ENCODE measurements at regions of chr17 and their contacts with region 1.

Region 1: GRCh38 chr17:3647769-3648555 is 11.4 kb downstream of the CTNS start:
- DNase-seq: peak; percentile 51
- H3K4me3 ChIP-seq: no peak overlapping the region
- H3K27ac ChIP-seq: no peak overlapping the region
- H3K4me1 ChIP-seq: no peaks in the 10 kb centered on the region
- H3K27me3 ChIP-seq: no peaks in the 10 kb centered on the region
- CTCF ChIP-seq: peak; percentile 41

Region 2: DNA sequence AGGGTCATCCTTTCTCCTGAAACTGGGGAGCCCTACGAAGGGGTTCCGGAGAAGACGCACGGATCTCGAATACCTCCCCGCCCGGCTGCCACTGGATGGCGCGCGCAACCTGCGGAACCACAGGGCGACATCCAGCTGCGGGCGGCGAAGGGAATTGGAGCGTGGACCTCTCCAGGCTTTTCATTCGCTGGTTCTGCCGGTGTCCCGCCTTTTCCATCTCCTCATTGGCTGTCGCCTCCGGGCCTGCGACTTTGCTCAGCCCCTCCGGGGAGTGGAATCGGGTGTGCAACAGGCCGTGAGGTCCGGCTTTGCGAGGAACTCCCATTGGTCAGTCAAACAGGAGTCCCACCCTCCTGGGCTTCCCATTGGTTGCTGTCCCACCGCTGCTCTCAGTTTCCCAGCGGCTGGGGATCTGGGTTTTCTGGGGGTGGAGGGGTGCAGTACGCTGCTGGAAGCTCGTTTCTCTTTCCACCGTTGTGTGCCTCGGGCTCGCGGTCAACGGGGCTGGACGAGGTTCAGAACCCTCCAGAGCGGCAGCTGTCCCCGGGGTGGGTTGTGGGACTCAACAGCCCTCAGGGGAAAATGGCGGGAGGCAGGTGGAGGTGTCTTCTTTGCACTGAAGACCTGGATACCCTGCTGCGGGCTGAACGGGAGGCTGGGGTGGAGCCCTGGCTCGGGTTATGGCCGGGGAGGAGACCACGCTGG is 599.0 kb before region 1 on chr17:
- intact Hi-C with region 1: loop called (anchors 5 kb)
- DNase-seq: peak; percentile 97
- H3K4me3 ChIP-seq: peak overlapping the region; percentile 48
- H3K27ac ChIP-seq: peak overlapping the region; percentile 4
- H3K4me1 ChIP-seq: no peaks in the 10 kb centered on the region
- H3K27me3 ChIP-seq: no peaks in the 10 kb centered on the region
- CTCF ChIP-seq: peak; percentile 71

Region 3: GRCh38 chr17:3535253-3535995 is 112.5 kb before region 1 on chr17:
- intact Hi-C with region 1: loop called (anchors 10 kb)
- DNase-seq: peak; percentile 51
- H3K4me3 ChIP-seq: peak overlapping the region; percentile 21
- H3K27ac ChIP-seq: no peak overlapping the region
- H3K4me1 ChIP-seq: no peaks in the 10 kb centered on the region
- H3K27me3 ChIP-seq: no peaks in the 10 kb centered on the region
- CTCF ChIP-seq: peak; percentile 70

Region 4: DNA sequence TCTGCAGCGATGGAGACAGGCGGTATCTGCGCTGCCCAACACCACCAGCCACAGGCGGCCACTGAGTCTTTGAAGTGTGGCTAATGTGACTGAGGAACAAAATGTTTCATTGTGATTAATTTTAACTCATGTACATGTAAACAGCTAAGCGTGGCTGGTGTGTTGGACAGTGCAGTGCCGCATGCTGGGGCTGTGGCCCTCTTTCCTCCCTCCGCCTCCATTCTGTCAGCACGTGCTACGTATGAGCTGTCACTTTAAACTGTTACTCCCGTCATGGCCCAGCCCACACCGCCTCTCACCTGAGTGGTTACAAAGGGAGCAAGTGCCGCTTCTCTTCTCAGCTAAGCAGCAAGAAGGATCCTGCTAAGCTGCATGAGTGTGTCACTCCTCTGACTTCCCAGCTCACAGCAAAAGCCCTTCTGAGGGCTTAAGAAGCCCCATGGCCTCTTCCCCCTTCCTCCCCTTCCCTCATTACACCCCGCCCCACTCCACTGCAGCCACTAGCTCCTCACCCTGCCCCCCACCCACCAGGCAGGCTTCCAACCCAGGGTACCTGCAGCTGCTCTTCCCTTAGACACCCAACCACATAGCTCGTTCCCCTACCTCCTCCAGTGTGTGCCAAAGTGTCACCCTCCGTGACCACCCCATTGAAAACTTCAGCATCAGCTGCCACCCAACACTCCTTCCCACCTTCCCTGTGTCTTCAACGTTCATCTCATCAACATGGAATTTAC is 90.8 kb after region 1 on chr17:
- intact Hi-C with region 1: no loop called
- DNase-seq: peak; percentile 62
- H3K4me3 ChIP-seq: no peak overlapping the region
- H3K27ac ChIP-seq: no peak overlapping the region
- H3K4me1 ChIP-seq: peaks cover 7% of the 10 kb centered on the region
- H3K27me3 ChIP-seq: no peaks in the 10 kb centered on the region
- CTCF ChIP-seq: no peak

Measured in colonic mucosa (tissue), 4 donors.